Activated naive CD8-positive, alpha-beta T cell treated with anti-CD3 and anti-CD28 coated beads, Interleukin-2, amount 10 ng/mL, durations not matched to agents 7 days and 5 days (primary cell): ENCODE measurements at regions of chr19 and their contacts with region 1.

Region 1: DNA sequence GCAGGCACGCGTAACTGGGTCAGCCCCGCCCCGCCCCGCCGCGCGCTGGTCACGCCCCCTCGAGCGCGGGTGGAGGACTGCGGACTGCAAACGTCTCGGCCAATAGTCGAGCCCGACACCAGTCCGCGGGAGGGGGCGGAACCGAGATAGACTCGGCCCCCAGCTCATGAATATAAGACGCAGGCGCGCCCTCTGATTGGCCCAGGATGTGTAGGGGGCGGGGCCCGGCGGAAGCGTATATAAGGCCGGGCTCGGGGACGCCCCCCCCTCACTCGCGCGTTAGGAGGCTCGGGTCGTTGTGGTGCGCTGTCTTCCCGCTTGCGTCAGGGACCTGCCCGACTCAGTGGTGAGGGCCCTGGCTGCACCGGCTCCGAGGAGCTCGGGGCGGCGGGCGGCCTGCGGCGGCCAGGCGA is at the start of gene CIRBP:
- DNase-seq: peak; percentile 99
- ATAC-seq: peak; percentile 77
- H3K4me3 Mint-ChIP-seq: peak within 1 kb of the TSS; percentile 94
- H3K27ac Mint-ChIP-seq: peak within 1 kb of the TSS; percentile 88
- H3K4me1 Mint-ChIP-seq: peaks cover 51% of the 10 kb centered on the region
- H3K27me3 Mint-ChIP-seq: no peaks in the 10 kb centered on the region
- total RNA-seq, gene CIRBP: 327 to 342 TPM

Region 2: GRCh38 chr19:1064661-1065605 is 204.1 kb before region 1 on chr19:
- POLR2A ChIA-PET with region 1: interaction called, 16 read pairs
- DNase-seq: peak; percentile 83
- ATAC-seq: peak; percentile 39
- H3K4me3 Mint-ChIP-seq: peak overlapping the region; percentile 61
- H3K27ac Mint-ChIP-seq: peak overlapping the region; percentile 69
- H3K4me1 Mint-ChIP-seq: peaks cover 20% of the 10 kb centered on the region
- H3K27me3 Mint-ChIP-seq: no peaks in the 10 kb centered on the region

Region 3: DNA sequence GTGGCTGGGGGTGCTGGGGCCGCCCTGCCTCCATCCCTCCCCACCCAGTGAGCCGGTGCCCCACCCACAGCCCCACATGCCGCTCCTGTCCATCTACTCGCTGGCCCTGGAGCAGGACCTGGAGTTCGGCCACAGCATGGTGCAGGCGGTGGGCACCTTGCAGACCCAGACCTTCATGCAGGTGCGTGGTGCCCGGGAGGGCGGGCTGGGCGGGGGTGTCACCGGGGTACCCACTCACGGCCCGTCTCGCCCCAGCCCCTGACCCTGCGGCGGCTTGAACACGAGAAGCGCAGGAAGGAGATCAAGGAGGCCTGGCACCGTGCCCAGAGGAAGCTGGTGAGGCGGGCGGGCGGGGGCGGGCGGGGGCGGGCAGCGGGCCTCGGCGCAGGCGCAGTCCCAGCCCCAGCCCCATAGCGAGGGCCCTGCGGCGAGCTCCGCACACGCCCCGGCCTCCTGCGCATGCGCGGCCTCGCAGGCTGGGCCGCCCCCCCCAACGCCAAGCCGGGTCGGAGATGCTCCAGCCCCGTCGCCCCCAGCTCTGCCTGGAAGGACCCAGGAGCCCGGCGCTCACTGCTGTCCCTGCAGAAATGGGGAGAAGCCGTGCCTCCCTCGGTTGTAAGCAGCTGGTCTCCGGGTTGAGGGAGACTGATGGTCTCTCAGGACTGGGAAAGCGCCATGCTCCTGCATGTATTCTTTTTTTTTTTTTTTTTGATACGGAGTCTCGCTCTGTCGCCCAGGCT is 194.4 kb before region 1 on chr19:
- POLR2A ChIA-PET with region 1: interaction called, 14 read pairs
- DNase-seq: peak; percentile 91
- ATAC-seq: peak; percentile 32
- H3K4me3 Mint-ChIP-seq: peak overlapping the region; percentile 72
- H3K27ac Mint-ChIP-seq: peak overlapping the region; percentile 87
- H3K4me1 Mint-ChIP-seq: peaks cover 39% of the 10 kb centered on the region
- H3K27me3 Mint-ChIP-seq: no peaks in the 10 kb centered on the region

Region 4: DNA sequence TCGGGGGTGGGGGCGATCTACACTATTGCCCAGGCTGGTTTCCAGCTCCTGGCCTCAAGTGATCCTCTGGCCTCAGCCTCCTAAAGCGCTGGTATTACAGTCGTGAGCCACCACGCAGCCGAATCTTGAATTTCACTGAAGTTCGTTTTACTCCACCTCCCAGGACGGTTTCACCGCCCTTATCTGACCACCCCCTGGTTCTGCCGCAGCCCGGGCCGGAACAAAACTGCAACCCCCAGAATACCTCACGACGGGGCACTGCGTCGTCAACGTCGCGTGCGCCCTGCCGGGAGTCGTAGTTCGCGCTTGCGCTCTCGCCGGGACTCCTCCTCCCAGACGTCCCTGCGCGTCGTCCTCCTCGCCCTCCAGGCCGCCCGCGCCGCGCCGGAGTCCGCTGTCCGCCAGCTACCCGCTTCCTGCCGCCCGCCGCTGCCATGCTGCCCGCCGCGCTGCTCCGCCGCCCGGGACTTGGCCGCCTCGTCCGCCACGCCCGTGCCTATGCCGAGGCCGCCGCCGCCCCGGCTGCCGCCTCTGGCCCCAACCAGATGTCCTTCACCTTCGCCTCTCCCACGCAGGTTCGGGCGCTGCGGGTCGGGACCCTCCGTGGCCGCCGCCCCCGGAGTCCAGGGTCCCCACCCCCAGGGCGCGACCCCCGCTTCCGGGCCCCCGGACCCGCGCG is 27.5 kb before region 1 on chr19 and contains the start of gene ATP5F1D:
- POLR2A ChIA-PET with region 1: interaction called, 385 read pairs
- DNase-seq: peak; percentile 92
- ATAC-seq: peak; percentile 75
- H3K4me3 Mint-ChIP-seq: peak within 1 kb of the TSS; percentile 85
- H3K27ac Mint-ChIP-seq: peak within 1 kb of the TSS; percentile 93
- H3K4me1 Mint-ChIP-seq: peaks cover 24% of the 10 kb centered on the region
- H3K27me3 Mint-ChIP-seq: peaks cover 15% of the 10 kb centered on the region
- total RNA-seq, gene ATP5F1D: 157 to 161 TPM

Region 5: DNA sequence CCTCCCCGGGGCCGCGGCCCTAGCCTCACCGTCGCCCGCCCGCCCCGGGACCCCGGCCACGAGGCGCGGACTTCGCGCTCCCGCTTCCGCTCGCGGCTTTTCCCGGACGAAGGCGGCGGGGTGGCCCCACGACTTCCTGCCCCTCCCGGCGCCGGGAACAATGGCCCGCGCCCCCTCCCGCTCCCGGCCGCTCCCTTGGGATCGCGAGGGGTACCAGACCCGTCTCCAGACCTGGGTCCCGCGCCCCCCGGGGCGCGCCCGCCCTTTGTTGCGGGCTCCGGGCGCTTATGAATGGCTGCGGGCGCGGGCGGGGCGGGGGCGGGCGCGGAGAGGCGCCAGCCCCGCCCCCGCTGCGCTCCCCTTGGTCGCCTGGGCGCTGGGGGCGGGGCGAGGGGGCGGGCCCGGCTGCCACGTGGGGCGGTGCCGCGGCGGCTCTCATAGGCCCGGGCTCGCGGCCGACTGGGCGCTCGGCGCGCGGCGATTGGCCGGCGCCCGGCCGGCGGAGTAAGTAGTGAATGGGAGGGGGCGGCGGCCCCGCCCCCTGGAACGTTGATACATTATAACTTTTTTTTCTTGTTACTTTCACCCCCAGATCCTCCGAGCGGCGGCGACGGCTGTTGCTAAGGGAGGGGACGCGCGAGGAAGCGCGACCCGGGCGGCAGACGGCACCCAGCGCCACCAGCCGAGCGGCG is 19.6 kb before region 1 on chr19:
- POLR2A ChIA-PET with region 1: interaction called, 385 read pairs
- DNase-seq: peak; percentile 94
- ATAC-seq: peak; percentile 47
- H3K4me3 Mint-ChIP-seq: peak overlapping the region; percentile 82
- H3K27ac Mint-ChIP-seq: peak overlapping the region; percentile 82
- H3K4me1 Mint-ChIP-seq: peaks cover 7% of the 10 kb centered on the region
- H3K27me3 Mint-ChIP-seq: no peaks in the 10 kb centered on the region

Region 6: DNA sequence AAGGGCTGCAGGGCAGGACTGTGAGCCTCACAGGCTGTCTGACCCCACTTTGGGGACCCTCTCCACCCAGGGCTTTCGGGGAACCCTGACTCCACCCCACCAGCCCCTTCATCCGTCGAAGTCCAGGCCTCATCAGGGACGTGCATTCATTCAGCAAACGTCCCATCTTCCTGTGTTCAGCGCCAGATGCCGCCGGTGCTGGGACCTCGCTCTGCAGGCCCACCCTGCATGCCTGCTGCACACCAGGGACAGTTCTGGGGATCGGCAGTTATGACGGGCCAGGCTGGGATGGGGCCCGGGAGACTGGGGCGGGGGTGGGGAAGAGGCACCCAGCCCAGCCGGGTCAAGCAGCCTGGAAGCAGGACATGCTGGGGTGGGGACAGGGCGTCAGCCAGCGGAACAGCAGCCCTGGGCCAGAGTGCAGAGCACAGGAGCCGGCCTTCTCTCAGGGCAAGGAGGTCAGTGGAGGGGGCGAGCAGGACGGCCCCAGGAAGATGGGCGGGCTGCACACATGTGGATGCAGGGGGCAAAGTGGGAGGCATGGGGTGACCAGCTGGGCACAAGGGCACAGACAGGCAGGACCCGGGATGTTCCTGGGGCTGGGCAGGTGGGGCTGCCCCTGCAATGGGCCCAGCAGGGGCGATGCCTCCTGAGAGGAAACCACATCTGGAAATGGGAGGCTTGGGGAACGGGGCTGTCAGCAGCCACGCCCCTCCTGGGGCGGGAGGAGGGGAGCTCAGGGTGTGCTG is 127.1 kb after region 1 on chr19:
- POLR2A ChIA-PET with region 1: interaction called, 10 read pairs
- DNase-seq: no peak
- ATAC-seq: no peak
- H3K4me3 Mint-ChIP-seq: no peak overlapping the region
- H3K27ac Mint-ChIP-seq: no peak overlapping the region
- H3K4me1 Mint-ChIP-seq: peaks cover 2% of the 10 kb centered on the region
- H3K27me3 Mint-ChIP-seq: no peaks in the 10 kb centered on the region

Region 7: DNA sequence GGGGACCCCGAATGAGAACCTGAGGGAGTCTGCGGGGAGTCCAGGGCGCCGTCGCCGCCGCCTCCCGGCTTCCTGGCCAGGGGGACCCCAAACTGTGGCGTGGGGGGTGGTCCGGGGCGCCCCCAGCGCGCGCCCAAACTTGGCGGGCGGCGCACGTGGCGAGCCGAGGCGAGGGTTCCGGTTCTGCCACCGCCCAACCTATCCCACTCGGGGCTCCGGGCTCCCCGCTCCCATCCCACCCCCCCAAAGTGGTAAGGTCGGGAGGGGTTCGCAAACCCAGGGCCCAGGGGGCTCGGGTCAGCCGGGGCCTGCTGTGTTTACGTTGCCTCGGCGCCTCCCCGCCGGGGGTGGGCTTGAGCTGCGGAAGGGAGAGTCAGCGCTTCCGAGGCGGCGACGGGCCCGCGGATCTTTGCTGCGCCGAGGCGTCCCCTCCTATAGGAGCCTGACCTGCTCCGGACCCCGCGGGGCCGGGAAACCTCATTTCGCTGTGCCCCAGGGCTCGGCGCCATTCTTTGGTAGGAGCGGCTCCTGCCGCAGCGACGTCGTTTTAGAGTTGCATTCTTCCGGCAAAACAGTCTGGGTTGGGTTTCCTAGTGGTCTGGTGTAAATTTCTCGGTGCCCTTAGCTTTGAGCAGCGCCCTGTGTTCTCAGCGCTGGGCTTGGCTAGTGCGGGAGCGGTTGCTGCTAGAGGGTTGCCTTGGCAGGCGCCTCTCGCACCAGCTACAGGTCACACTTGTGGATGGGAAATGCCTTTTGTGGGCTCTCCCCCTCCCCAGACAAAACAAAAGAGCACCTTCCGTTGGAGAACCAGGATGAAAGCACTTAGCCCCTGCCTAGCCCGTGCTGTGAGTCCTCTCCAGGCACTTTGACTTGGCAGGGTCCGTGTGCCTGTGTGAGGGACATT is 139.5 kb after region 1 on chr19:
- POLR2A ChIA-PET with region 1: interaction called, 12 read pairs
- DNase-seq: peak; percentile 74
- ATAC-seq: peak; percentile 26
- H3K4me3 Mint-ChIP-seq: peak overlapping the region; percentile 94
- H3K27ac Mint-ChIP-seq: peak overlapping the region; percentile 94
- H3K4me1 Mint-ChIP-seq: peaks cover 36% of the 10 kb centered on the region
- H3K27me3 Mint-ChIP-seq: no peaks in the 10 kb centered on the region